Dorsolateral prefrontal cortex (tissue), 120 donors: ENCODE measurements at regions of chr3 and their contacts with region 1.

Region 1: GRCh38 chr3:88003115-88003755 is 55.6 kb downstream of the CGGBP1 start:
- DNase-seq: no peak
- H3K4me3 ChIP-seq: no peak overlapping the region
- H3K27ac ChIP-seq: no peak overlapping the region
- H3K27me3 ChIP-seq: no peaks in the 10 kb centered on the region
- CTCF ChIP-seq: peak; percentile 61 to 91 (median 80)

Region 2: GRCh38 chr3:87298111-87298718 is 705.0 kb before region 1 on chr3:
- intact Hi-C with region 1: loop called in 1 of 2 experiments (anchors 10 kb)
- DNase-seq: no peak
- H3K4me3 ChIP-seq: no peak overlapping the region
- H3K27ac ChIP-seq: no peak overlapping the region
- H3K27me3 ChIP-seq: no peaks in the 10 kb centered on the region
- CTCF ChIP-seq: peak; percentile 59 to 90 (median 78)

Region 3: GRCh38 chr3:87350364-87351199 is 652.7 kb before region 1 on chr3:
- intact Hi-C with region 1: loop called (anchors 5 to 10 kb)
- DNase-seq: peak in 2 of 10 donors; percentile 18 to 30
- H3K4me3 ChIP-seq: no peak overlapping the region
- H3K27ac ChIP-seq: no peak overlapping the region
- H3K27me3 ChIP-seq: no peaks in the 10 kb centered on the region
- CTCF ChIP-seq: peak; percentile 71 to 97 (median 87)

Region 4: GRCh38 chr3:88084097-88084501 is 80.9 kb after region 1 on chr3:
- intact Hi-C with region 1: no loop called
- DNase-seq: no peak
- H3K4me3 ChIP-seq: no peak overlapping the region
- H3K27ac ChIP-seq: no peak overlapping the region
- H3K27me3 ChIP-seq: no peaks in the 10 kb centered on the region
- CTCF ChIP-seq: no peak